Colonic mucosa (tissue), 4 donors: ENCODE measurements at regions of chr7 and their contacts with region 1.

Region 1: DNA sequence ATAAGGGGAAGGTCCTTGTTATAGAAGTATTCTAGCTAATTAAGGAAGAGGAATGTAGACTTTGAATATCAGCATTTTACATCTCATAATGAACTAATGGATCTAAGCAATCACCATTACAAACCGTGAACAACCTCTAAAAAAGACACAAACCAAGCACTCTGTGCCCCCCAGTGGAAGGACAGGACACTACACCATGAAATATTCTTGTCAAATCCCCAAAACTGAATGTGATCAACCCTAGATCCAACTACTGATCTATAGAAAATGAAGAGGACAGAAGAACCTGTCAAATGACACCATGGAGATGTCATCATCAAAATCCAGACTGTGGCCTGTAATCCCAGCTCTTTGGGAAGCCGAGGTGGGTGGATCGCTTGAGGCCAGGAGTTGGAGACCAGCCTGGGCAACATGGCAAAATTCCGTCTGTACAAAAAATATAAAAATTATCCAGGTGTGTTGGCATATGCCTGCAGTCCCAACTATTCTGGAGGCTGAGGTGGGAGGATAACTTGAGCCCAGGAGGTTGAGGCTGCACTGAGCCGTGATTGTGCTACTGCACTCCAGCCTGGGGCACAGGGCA is 111.3 kb upstream of the CARD11 start:
- DNase-seq: peak; percentile 42
- H3K4me3 ChIP-seq: no peak overlapping the region
- H3K27ac ChIP-seq: no peak overlapping the region
- H3K4me1 ChIP-seq: no peaks in the 10 kb centered on the region
- H3K27me3 ChIP-seq: no peaks in the 10 kb centered on the region
- CTCF ChIP-seq: peak; percentile 46

Region 2: DNA sequence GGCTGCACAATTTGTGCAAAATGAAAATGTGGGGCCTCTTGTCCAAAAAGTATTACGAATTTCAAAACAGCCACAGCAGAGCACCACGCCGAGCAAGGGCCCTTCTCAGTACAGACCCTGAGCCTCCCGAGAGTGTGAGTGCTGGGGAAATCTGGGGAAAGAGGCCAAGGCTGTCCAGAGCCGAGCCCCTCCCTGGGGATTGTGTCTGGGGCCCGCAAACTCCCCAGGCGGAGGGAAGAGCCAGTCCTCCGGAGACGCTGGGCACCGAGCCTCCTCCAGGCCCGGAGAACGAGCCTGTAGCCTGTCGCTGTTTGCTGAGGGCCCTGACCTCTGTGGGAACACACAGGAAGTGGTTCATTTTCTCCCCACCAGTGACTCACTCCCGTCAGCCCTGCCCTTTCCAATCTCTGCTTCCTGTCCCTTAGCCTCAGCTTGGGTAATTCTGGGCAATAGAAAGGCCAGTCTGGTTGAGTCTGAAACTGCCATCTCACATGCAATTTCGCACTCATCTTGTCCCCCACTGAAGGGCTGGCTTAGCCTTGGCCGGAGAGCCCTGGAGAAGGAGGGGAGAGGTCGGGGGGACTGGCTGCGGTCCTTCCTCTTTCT is 291.4 kb before region 1 on chr7:
- intact Hi-C with region 1: loop called (anchors 2 kb)
- DNase-seq: peak; percentile 68
- H3K4me3 ChIP-seq: no peak overlapping the region
- H3K27ac ChIP-seq: peak overlapping the region; percentile 84
- H3K4me1 ChIP-seq: no peaks in the 10 kb centered on the region
- H3K27me3 ChIP-seq: no peaks in the 10 kb centered on the region
- CTCF ChIP-seq: no peak

Region 3: DNA sequence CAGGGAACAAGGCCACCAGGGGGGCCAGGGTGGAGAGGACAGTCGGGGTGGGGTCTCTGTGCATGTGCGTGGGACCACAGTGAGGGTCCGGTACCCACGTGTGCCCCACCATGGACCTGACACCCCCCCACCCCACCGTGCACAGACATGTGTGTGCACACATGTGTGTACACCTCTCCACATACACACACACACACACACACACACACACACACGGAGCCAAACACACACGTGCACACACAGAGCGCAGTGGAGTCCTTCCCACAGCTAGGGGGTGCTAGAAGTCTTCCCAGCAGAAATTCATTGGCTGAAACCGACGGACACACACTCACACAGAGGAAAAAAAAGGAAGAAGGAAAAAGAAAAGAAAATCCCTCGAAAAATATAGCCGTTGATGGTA is 268.1 kb before region 1 on chr7:
- intact Hi-C with region 1: loop called (anchors 5 kb)
- DNase-seq: peak; percentile 67
- H3K4me3 ChIP-seq: no peak overlapping the region
- H3K27ac ChIP-seq: no peak overlapping the region
- H3K4me1 ChIP-seq: no peaks in the 10 kb centered on the region
- H3K27me3 ChIP-seq: peaks cover 17% of the 10 kb centered on the region
- CTCF ChIP-seq: peak; percentile 62

Region 4: DNA sequence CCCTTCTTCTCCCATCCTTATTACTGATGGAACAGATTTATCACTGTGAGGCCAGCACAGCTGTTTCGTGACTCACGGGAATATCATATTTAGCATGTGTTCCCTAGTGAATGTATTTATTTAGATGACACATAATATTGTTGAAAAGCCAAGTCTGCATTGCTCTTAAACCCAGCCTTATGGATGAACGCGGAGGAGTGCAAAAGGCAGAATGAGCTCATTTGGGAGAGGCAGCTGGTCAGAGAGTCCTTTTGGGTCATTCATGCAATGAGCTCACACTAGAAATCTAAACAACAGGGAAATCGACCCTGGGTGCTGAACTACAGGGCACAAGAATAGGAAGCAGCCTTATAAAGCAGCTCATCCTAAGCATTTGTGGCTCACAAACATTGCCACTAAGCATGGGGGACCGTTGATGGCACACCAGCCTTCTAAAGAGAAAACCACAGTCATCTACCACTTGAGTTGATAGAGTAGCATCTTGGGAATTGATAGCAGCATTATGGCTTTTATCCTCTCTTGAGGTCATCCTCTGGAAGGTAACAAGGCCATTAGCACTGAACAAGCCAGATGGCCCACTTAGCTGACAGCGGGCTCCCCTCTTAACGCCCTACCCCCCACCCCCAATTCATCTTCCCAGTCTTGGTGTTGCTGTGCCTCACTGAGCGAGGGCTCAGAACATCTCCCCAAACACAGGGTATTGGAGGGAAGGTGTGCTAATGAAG is 113.1 kb after region 1 on chr7:
- intact Hi-C with region 1: no loop called
- DNase-seq: no peak
- H3K4me3 ChIP-seq: no peak overlapping the region
- H3K27ac ChIP-seq: no peak overlapping the region
- H3K4me1 ChIP-seq: no peaks in the 10 kb centered on the region
- H3K27me3 ChIP-seq: no peaks in the 10 kb centered on the region
- CTCF ChIP-seq: no peak

Region 5: DNA sequence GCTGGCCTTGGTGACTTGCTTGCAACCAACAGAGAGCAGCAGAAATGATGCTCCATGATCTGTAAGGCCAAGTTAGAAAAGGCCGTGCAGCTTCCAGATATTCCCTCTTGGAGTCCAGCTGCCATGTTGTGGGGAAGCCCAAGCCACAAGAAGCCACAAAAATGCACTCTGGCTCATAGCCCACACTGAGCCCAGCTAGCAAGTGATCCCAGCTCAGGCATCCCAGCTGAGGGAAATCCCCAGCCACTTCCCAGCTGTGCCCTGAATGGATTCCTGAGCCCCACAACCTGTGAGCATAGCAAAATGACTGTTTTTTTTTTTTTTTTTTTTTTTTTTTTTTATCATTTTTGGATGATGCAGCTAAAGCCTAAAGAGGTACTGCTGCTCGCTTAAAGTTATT is 135.0 kb after region 1 on chr7:
- intact Hi-C with region 1: no loop called
- DNase-seq: no peak
- H3K4me3 ChIP-seq: no peak overlapping the region
- H3K27ac ChIP-seq: no peak overlapping the region
- H3K4me1 ChIP-seq: no peaks in the 10 kb centered on the region
- H3K27me3 ChIP-seq: no peaks in the 10 kb centered on the region
- CTCF ChIP-seq: no peak

Region 6: GRCh38 chr7:3636131-3636860 is 481.3 kb after region 1 on chr7:
- intact Hi-C with region 1: no loop called
- DNase-seq: no peak
- H3K4me3 ChIP-seq: no peak overlapping the region
- H3K27ac ChIP-seq: no peak overlapping the region
- H3K4me1 ChIP-seq: no peaks in the 10 kb centered on the region
- H3K27me3 ChIP-seq: no peaks in the 10 kb centered on the region
- CTCF ChIP-seq: no peak